ENCODE measurements at regions of chr20 and their contacts with region 1.

Region 1: GRCh38 chr20:31951530-31952453 is at the start of gene PDRG1:
- DNase-seq: peak; percentile 99
- ATAC-seq: peak; percentile 99
- total RNA-seq, gene PDRG1: 9.7 TPM

Region 2: GRCh38 chr20:31851240-31851955 is 100.4 kb before region 1 on chr20:
- intact Hi-C with region 1: loop called (anchors 5 kb)
- DNase-seq: no peak
- ATAC-seq: no peak

Region 3: DNA sequence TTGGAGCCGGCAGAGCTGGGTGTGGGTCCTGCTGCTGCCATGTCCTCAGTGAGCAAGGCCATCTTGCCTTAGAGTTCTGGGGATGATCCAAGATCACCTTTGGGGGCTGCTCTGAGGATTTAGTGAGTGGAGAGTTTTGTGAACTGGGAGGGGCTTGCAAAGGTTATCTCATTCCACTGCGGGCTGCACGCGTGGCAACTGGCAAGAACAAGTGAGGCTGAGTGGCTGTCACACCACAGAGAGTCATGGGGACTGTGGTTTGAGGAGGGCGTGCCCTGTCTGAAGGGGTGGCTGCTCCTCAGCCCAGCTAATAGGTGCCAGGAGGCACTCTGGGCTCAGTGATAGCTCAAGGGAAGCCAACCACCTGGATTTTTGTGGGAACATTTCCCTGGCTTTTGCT is 43.8 kb before region 1 on chr20:
- intact Hi-C with region 1: no loop called
- DNase-seq: no peak
- ATAC-seq: no peak